A549 (cell line): ENCODE measurements at regions of chr12 and their contacts with region 1.

Region 1: DNA sequence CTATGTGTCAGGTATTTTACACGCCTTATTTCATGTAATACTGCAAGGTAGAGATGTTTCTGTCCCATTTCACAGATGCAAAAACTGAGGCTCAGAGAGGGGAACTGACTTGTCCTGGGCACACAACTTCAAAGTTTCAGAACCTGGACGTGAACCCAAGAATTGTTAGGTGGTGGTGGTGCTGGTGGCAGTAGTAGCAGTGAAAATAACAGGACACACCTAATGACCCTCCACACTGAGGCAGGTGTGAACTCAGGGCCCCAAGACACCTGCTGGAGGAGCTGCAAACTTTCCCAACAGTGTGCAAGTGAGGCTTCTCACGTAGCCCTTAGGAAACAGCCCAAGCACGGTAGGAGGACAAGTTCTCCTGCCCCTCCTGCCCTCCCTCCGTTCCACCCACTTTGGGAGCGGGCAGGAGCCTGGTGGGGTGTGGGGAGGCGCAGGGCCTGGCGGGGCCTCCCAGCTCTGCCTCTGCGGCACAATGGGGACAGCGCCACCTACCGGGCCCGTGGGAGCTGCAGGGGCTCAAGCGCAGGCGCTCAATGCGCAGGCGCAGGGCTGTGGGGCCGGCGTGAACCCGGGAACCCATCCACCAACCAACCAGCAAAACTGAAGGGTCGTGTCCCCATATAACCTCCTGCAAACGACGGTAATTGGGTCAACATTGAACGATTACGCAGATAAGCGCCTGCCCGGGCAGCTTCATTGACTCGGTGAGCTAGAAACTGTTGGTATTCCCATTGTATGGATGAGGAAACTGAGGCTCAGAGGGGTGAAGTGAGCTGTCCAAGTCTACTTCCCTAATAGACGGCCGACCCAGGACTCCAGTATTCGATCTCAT is 12.0 kb upstream of the TRPV4 start:
- DNase-seq: peak; percentile 88 to 90
- ATAC-seq: peak; percentile 91 to 95
- H3K4me3 ChIP-seq: peak overlapping the region; percentile 35; the same call in 2 of the 3 replicates
- H3K27ac ChIP-seq: peak overlapping the region; percentile 58 to 76
- H3K4me1 ChIP-seq: peaks cover 10% of the 10 kb centered on the region
- CTCF ChIP-seq: peak; percentile 99
- EP300 ChIP-seq: no peak
- POLR2A ChIP-seq: no peak
- RAD21 ChIP-seq: peak; percentile 93 to 96

Region 2: GRCh38 chr12:109518820-109519665 is 326.2 kb before region 1 on chr12:
- CTCF ChIA-PET with region 1: interaction called, 16 read pairs
- POLR2A ChIA-PET with region 1: no interaction called
- DNase-seq: peak; percentile 48 to 80
- ATAC-seq: peak; percentile 64 to 91; a peak in 4 of 6 replicates
- H3K4me3 ChIP-seq: no peak overlapping the region
- H3K27ac ChIP-seq: no peak overlapping the region
- H3K4me1 ChIP-seq: no peaks in the 10 kb centered on the region
- CTCF ChIP-seq: peak; percentile 86
- EP300 ChIP-seq: no peak
- POLR2A ChIP-seq: no peak
- RAD21 ChIP-seq: peak; percentile 74 to 82

Region 3: GRCh38 chr12:109804820-109805761 is 40.1 kb before region 1 on chr12:
- CTCF ChIA-PET with region 1: interaction called, 277 read pairs
- POLR2A ChIA-PET with region 1: no interaction called
- DNase-seq: peak; percentile 62 to 82
- ATAC-seq: peak; percentile 77 to 93
- H3K4me3 ChIP-seq: no peak overlapping the region
- H3K27ac ChIP-seq: no peak overlapping the region
- H3K4me1 ChIP-seq: no peaks in the 10 kb centered on the region
- CTCF ChIP-seq: peak; percentile 94
- EP300 ChIP-seq: no peak
- POLR2A ChIP-seq: no peak
- RAD21 ChIP-seq: peak; percentile 91 to 94

Region 4: GRCh38 chr12:109818905-109819500 is 26.2 kb before region 1 on chr12:
- CTCF ChIA-PET with region 1: interaction called, 41 read pairs
- POLR2A ChIA-PET with region 1: no interaction called
- DNase-seq: peak in 1 of 2 experiments; percentile 63
- ATAC-seq: peak; percentile 35 to 50; a peak in 5 of 6 replicates
- H3K4me3 ChIP-seq: no peak overlapping the region
- H3K27ac ChIP-seq: peak overlapping the region in 1 of 2 experiments; percentile 37; a peak in 2 of 6 replicates
- H3K4me1 ChIP-seq: peaks cover 28% of the 10 kb centered on the region
- CTCF ChIP-seq: no peak
- EP300 ChIP-seq: no peak
- POLR2A ChIP-seq: no peak
- RAD21 ChIP-seq: no peak

Region 5: GRCh38 chr12:109833307-109834189 is 11.7 kb before region 1 on chr12 and contains the start of gene TRPV4:
- CTCF ChIA-PET with region 1: interaction called, 86 read pairs
- POLR2A ChIA-PET with region 1: no interaction called
- DNase-seq: no peak
- ATAC-seq: no peak
- H3K4me3 ChIP-seq: no peak within 1 kb of the TSS
- H3K27ac ChIP-seq: peak within 1 kb of the TSS in 1 of 2 experiments; percentile 59; a peak in 2 of 6 replicates
- H3K4me1 ChIP-seq: peaks cover 31% of the 10 kb centered on the region
- CTCF ChIP-seq: no peak
- EP300 ChIP-seq: no peak
- POLR2A ChIP-seq: no peak
- RAD21 ChIP-seq: no peak
- polyA plus RNA-seq, gene TRPV4: 0.37 and 0.52 TPM in 2 replicates

Region 6: DNA sequence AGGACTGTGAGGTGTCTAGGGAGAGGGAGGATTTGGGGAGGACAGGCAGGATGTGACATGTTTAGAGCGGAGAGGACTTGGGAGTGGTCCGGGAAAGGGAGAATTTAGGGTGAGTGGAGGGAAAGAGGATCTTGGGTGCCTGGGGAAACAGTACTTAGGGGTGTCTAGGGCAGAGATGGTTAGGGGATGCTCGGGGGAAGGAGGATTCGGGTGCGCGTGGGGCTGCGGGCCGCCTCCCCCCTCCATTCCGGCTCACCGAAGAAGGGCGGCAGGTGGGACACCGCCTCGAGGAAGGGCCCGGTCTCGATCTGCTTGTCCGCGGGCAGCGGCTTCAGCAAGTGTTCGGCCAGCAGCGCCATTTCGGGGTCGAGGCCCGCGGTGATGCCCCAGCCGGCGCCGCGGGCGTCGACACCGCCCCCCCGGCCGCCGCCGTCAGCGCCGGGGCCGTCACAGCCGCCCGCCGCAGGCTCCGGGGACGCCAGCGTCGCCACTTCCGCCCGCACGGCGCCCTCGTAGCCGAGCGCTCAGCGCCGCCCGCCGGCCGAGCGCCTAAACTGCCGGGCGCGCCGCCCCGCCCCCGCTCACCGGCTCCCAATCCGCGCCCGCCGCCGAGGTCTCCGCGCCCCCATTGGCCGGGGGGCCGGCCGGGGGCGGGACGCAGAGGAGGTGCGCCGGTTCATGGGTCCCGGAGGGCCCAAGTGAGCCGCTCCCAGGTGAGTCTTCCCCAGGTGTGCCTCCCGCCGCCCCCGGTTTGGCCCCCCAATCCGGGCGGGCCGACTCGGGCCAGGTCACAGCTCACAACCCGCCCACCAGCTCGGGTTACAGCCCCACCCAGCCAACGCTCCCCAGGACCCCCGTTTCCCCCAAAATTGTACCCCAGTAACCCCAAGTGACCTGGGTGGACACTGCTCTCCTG is 35.1 kb after region 1 on chr12 and contains the start of gene GLTP:
- CTCF ChIA-PET with region 1: interaction called, 21 read pairs
- POLR2A ChIA-PET with region 1: no interaction called
- DNase-seq: peak; percentile 78 to 88
- ATAC-seq: peak; percentile 94
- H3K4me3 ChIP-seq: peak within 1 kb of the TSS; percentile 81
- H3K27ac ChIP-seq: peak within 1 kb of the TSS; percentile 82 to 90
- H3K4me1 ChIP-seq: peaks cover 43% of the 10 kb centered on the region
- CTCF ChIP-seq: peak; percentile 89
- EP300 ChIP-seq: no peak
- POLR2A ChIP-seq: peak; percentile 30; the same call in 1 of the 2 replicates
- RAD21 ChIP-seq: peak; percentile 53 to 91; a peak in 4 of 5 replicates
- polyA plus RNA-seq, gene GLTP: 18.8 and 19.2 TPM in 2 replicates